Activated T-helper 2 cell treated with anti-CD3 and anti-CD28 coated beads, Interferon-gamma antibody, Interleukin-2, Interleukin-4, amounts not matched to agents 10 μg/mL and 5 μg/mL and 100 μg/mL, durations not matched to agents 14 hours and 24 hours and 36 hours (primary cell): ENCODE measurements at regions of chr4 and their contacts with region 1.

Region 1: GRCh38 chr4:139950568-139950967 is 203.4 kb downstream of the MAML3 start:
- DNase-seq: peak; percentile 43
- H3K4me3 Mint-ChIP-seq: peak overlapping the region; percentile 40
- H3K27ac Mint-ChIP-seq: peak overlapping the region; percentile 83
- H3K4me1 Mint-ChIP-seq: peaks cover 27% of the 10 kb centered on the region
- H3K27me3 Mint-ChIP-seq: peaks cover 9% of the 10 kb centered on the region

Region 2: DNA sequence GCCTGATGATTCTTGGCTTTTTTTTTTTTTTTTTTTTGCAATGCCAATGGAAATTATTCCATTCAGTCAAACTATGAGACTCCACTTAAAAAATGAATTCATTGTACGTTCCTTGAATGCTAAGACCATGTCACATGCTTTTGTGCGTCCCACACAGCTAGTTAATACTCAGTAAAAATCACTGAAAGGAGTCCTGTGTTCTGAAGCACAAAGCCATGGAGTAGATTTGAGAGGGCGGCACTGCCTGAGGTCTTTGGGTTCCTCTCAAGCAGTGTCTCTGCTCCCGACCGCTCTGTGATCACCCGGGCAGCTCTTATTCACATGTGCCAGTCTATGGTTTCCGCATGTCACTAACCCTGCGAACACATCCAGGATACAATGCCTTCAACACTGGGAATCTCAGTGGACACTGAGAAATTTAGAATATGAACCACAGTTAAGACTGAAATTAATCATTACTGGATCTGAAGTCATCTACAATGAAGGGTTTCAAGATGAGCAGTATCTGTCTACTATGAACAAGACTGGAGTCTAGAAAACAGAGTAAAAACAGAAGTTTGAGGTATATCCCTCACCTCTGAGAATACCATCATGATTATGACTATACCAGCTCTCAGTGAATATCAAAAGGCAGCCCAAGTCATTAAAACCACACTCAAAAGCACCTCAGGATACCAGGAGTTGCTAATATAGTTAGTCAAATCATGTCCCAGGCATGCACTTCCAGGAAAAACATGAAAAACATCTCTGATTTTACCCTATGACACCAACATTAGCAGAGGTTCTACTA is 91.9 kb before region 1 on chr4:
- intact Hi-C with region 1: loop called (anchors 1 kb)
- DNase-seq: no peak
- H3K4me3 Mint-ChIP-seq: no peak overlapping the region
- H3K27ac Mint-ChIP-seq: peak overlapping the region; percentile 61
- H3K4me1 Mint-ChIP-seq: peaks cover 41% of the 10 kb centered on the region
- H3K27me3 Mint-ChIP-seq: peaks cover 26% of the 10 kb centered on the region

Region 3: GRCh38 chr4:139988863-139989733 is 38.5 kb after region 1 on chr4:
- intact Hi-C with region 1: loop called (anchors 2 kb)
- DNase-seq: no peak
- H3K4me3 Mint-ChIP-seq: no peak overlapping the region
- H3K27ac Mint-ChIP-seq: no peak overlapping the region
- H3K4me1 Mint-ChIP-seq: peaks cover 12% of the 10 kb centered on the region
- H3K27me3 Mint-ChIP-seq: peaks cover 17% of the 10 kb centered on the region

Region 4: GRCh38 chr4:140071806-140072205 is 121.2 kb after region 1 on chr4:
- intact Hi-C with region 1: loop called (anchors 2 kb)
- DNase-seq: peak; percentile 72
- H3K4me3 Mint-ChIP-seq: peak overlapping the region; percentile 47
- H3K27ac Mint-ChIP-seq: peak overlapping the region; percentile 60
- H3K4me1 Mint-ChIP-seq: peaks cover 64% of the 10 kb centered on the region
- H3K27me3 Mint-ChIP-seq: peaks cover 18% of the 10 kb centered on the region

Region 5: GRCh38 chr4:140252742-140253555 is 302.4 kb after region 1 on chr4:
- intact Hi-C with region 1: loop called (anchors 5 kb)
- DNase-seq: peak; percentile 39
- H3K4me3 Mint-ChIP-seq: peak overlapping the region; percentile 68
- H3K27ac Mint-ChIP-seq: peak overlapping the region; percentile 56
- H3K4me1 Mint-ChIP-seq: peaks cover 36% of the 10 kb centered on the region
- H3K27me3 Mint-ChIP-seq: peaks cover 17% of the 10 kb centered on the region